IMR-90 (cell line): ENCODE measurements at regions of chr10 and their contacts with region 1.

Region 1: DNA sequence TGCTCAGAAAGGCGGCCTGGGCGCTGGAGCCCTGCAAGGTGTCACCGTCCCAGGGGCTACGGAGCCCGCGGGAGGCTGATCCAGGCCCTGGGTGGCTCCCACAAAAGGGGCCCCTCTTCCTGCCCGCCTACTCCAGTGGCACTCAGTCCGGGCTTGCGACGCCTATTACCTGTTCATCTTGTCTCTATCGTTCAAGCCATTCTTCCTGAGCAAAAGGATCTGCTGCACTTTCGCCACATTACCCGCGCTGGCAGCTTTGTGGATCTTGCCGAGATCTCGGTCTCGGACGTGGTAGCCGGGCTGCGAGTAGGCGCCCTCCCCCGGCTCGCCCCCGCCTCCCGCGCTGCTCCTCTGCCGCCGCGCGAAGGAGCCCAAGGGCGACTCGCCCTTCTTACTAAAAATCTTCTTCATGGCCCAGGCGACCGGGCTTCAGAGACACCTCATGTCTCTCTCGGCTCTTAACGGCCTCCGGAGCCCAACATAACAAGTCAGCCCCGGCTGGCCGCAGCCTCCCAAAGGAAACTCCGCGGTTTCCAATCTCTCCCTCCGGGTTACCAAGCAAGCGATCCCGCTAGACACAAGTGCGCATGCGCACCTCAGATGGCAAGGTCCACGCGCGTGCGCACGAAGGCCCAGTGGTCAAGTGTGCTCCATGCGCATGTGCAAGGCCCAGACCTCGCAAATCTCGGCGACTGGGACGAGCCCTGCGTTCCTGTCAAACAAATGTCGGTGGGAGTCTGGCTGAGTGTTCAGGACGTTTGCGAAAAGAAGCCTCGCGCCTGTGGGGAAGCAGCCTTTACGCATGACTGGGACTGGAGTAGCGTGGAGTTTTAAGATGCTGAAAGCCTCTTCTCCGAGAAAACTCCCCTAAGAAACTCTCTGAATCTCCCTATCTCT is at the start of gene ANKRD26:
- DNase-seq: peak; percentile 97
- ATAC-seq: peak; percentile 89
- H3K4me3 ChIP-seq: peak within 1 kb of the TSS; percentile 62
- H3K27ac ChIP-seq: peak within 1 kb of the TSS; percentile 78
- H3K4me1 ChIP-seq: no peaks in the 10 kb centered on the region
- H3K27me3 ChIP-seq: no peaks in the 10 kb centered on the region
- CTCF ChIP-seq: no peak
- POLR2A ChIP-seq: peak; percentile 87
- RAD21 ChIP-seq: no peak
- total RNA-seq, gene ANKRD26: 4.8 and 8.6 TPM in 2 replicates

Region 2: DNA sequence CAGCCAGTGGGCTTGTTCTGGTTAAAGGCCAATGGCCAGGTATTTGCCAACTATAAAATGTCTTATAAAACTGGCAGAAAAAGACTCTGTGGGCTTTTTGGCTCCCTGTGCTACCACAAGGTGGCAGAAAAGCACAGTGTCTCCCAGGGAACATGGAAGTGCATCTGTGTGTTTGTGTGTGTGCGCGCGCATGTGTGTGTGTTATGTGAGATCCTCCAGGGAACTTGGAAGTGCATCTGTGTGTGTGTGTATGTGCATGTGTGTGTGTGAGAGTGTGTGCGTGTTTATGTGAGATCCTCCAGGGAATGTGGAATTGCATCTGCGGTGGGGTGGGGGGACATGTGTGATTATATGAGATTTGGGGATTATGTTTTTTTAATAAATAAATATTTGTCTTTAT is 209.2 kb before region 1 on chr10:
- CTCF ChIA-PET with region 1: interaction called, 4 read pairs
- POLR2A ChIA-PET with region 1: no interaction called
- dilution Hi-C with region 1: no loop called
- in situ Hi-C with region 1: no loop called
- intact Hi-C with region 1: loop called (anchors 1 kb)
- DNase-seq: peak; percentile 66
- ATAC-seq: peak; percentile 75
- H3K4me3 ChIP-seq: no peak overlapping the region
- H3K27ac ChIP-seq: no peak overlapping the region
- H3K4me1 ChIP-seq: no peaks in the 10 kb centered on the region
- H3K27me3 ChIP-seq: peaks cover 2% of the 10 kb centered on the region; the same call in 1 of the 2 replicates
- CTCF ChIP-seq: peak; percentile 56
- POLR2A ChIP-seq: no peak
- RAD21 ChIP-seq: peak; percentile 52

Region 3: GRCh38 chr10:27041196-27041595 is 59.0 kb before region 1 on chr10:
- CTCF ChIA-PET with region 1: interaction called, 3 read pairs
- POLR2A ChIA-PET with region 1: interaction called, 10 read pairs
- dilution Hi-C with region 1: no loop called
- in situ Hi-C with region 1: no loop called
- intact Hi-C with region 1: no loop called
- DNase-seq: peak; percentile 32
- ATAC-seq: no peak
- H3K4me3 ChIP-seq: no peak overlapping the region
- H3K27ac ChIP-seq: no peak overlapping the region
- H3K4me1 ChIP-seq: peaks cover 6% of the 10 kb centered on the region; the same call in 1 of the 2 replicates
- H3K27me3 ChIP-seq: no peaks in the 10 kb centered on the region
- CTCF ChIP-seq: no peak
- POLR2A ChIP-seq: no peak
- RAD21 ChIP-seq: no peak